ENCODE measurements at regions of chr22 and their contacts with region 1.

Region 1: GRCh38 chr22:24133187-24133965 is 47.9 kb upstream of the SUSD2 start:
- DNase-seq: peak; percentile 47 to 66 (median 66)
- H3K4me3 ChIP-seq: no peak overlapping the region
- H3K27ac ChIP-seq: no peak overlapping the region
- H3K4me1 ChIP-seq: peaks cover 6 to 42% (median 38%) of the 10 kb centered on the region in 4 experiments
- H3K27me3 ChIP-seq: no peaks in the 10 kb centered on the region

Region 2: DNA sequence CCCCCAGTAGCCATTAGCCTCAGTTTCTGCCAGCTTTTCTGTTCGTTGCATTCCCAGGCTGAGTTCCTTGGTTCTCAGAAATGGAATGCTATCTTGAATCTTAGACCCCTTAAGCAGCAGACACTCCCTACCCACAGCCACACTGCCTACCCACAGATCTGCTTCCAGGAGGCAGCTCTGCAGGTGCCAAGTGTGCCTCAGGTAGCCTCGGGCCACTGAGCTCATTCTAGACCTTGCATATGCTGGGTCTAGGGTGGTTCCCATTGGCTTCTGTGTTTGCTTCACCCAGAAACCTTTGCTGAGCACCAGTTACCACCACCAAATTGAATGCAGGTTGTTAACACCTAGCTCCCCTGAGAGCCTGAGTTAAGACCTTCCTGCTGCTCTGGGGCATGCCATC is 10.2 kb before region 1 on chr22:
- CTCF ChIA-PET with region 1: interaction called, 12 read pairs
- POLR2A ChIA-PET with region 1: no interaction called
- DNase-seq: no peak
- H3K4me3 ChIP-seq: no peak overlapping the region
- H3K27ac ChIP-seq: no peak overlapping the region
- H3K4me1 ChIP-seq: peaks cover 0 to 7% (median 3%) of the 10 kb centered on the region in 4 experiments
- H3K27me3 ChIP-seq: no peaks in the 10 kb centered on the region

Measured in common myeloid progenitor, CD34-positive (primary cell).